Dendritic cell treated with granulocyte-macrophage colony-stimulating factor and Interleukin-4, amounts not matched to agents 40 ng/mL and 50 ng/mL, for 4 days (primary cell): ENCODE measurements at regions of chr10 and their contacts with region 1.

Region 1: DNA sequence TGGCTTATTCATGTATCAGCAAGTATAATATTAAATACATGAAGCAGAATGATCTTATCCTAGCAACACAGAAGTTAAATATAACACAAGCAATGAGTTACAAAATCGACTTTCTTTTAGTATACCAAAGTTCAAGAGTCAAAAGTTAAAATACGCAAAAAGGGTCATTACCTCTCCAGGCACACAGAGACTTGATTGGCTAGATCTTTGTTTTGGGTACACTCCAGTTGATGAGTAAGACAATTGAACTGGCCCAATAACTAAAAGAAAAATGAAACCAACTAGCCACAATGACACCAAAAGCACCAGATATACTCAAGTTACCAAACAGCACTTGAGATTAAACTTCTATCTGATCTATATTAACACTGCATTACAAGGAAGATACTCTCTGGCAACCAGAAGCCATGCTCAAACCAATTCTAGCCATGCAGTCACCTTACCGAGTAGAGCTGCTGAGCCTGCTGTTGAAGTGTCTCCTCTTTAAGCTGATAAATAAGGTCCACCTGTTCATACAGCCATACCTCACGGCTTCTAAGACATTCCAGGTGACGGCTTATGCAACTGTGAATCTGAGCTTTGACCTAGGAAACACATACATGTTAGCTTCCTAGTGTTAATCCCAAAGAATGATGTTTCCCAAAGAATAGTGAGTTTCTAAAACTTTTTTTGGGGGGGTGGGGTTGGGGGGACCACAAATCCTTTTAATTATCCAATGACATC is 15.6 kb downstream of the NCOA4 start:
- H3K4me3 Mint-ChIP-seq: no peak overlapping the region
- H3K27ac Mint-ChIP-seq: no peak overlapping the region
- H3K4me1 Mint-ChIP-seq: peaks cover 51% of the 10 kb centered on the region
- H3K27me3 Mint-ChIP-seq: no peaks in the 10 kb centered on the region

Region 2: DNA sequence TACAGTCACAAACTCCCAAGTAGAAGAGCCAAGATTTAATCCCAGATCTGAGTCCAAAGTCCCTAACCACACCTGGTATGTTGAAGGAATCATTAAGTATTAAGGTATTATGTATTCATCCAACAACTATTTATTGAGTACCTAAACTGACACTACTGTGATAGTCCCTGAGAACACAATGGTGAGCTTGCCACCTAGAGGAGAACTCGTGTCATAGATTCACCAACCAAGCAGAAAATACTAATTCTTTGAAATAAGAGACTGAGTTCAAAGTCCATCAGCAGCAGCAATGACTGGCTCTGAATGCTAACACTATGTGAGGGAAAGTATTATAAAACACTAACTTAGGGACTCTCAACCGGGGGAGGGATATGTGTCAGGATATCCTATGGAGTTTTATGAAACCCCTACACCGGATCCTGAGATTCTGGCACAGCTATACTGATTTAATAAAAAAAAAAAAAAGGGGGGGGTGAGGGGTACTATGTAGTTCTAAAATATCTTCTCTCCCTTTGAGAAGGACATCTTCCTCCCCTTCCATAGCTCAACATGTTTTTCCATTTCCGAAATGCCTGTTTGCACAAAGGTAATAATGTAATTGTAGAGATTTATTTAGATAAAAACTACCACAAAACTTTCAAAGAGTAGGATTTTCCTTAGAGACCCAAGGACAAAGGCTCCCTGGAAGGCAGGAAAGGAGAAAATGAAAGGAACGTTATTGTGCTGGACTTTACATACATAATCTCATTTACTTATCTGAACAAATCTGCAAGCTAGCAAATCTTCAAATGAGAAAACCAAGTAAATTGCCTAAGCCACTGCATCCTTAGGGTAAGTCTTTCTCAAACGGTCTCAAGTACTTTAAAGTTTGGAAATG is 14.0 kb after region 1 on chr10:
- intact Hi-C with region 1: loop called (anchors 2 kb)
- H3K4me3 Mint-ChIP-seq: peak overlapping the region; percentile 97
- H3K27ac Mint-ChIP-seq: peak overlapping the region; percentile 98
- H3K4me1 Mint-ChIP-seq: peaks cover 73% of the 10 kb centered on the region
- H3K27me3 Mint-ChIP-seq: no peaks in the 10 kb centered on the region